ENCODE measurements at regions of chr2 and their contacts with region 1.

Region 1: GRCh38 chr2:197499594-197500526 is at the starts of genes HSPD1 and HSPE1:
- DNase-seq: peak; percentile 100
- H3K4me3 Mint-ChIP-seq: peak within 1 kb of the TSS; percentile 89
- H3K27ac Mint-ChIP-seq: peak within 1 kb of the TSS; percentile 93
- H3K4me1 Mint-ChIP-seq: peaks cover 18% of the 10 kb centered on the region
- H3K27me3 Mint-ChIP-seq: no peaks in the 10 kb centered on the region
- CTCF ChIP-seq: no peak
- total RNA-seq, gene HSPD1: 681 and 693 TPM in 2 replicates
- total RNA-seq, gene HSPE1: 80.0 and 95.2 TPM in 2 replicates

Region 2: GRCh38 chr2:196677406-196677805 is 822.5 kb before region 1 on chr2:
- CTCF ChIA-PET with region 1: no interaction called
- POLR2A ChIA-PET with region 1: no interaction called
- intact Hi-C with region 1: no loop called
- DNase-seq: peak; percentile 77
- H3K4me3 Mint-ChIP-seq: no peak overlapping the region
- H3K27ac Mint-ChIP-seq: no peak overlapping the region
- H3K4me1 Mint-ChIP-seq: no peaks in the 10 kb centered on the region
- H3K27me3 Mint-ChIP-seq: no peaks in the 10 kb centered on the region
- CTCF ChIP-seq: no peak

Region 3: DNA sequence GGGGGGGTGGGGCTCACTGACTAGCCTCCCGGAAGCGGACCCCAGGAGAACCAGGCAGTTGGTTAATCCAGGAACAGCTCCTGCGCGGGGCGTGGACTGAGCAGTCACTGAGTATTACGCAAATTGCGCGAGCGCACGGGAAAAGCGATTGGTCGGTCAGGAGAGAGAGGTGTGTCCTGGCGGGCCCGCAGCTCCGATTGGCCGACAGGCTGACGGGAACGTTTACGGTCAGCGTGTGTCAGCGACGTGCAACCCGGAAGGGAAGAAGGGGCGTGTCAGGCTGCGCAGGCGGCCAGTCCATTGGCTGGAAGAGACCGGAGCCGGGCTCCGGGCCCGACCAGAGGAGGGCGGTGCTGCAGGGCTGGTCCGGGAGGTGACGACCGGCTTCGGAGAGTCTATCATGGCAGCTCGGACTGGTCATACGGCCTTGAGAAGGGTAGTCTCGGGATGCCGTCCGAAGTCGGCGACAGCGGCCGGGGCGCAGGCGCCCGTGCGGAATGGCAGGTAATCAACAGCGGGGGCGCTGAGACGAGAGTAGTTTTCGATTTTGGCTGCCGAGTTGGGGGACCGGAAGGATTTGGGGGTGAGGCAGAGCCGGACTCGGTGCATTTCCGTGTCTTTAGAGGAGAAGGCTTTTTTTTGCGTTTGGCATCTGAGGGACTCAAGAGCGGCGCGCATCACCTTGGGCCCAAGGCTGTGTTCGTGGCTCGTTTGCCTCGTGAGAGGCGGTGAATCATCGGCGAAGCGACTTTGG is 46.5 kb before region 1 on chr2 and contains the start of gene COQ10B:
- CTCF ChIA-PET with region 1: no interaction called
- POLR2A ChIA-PET with region 1: interaction called, 135 read pairs
- intact Hi-C with region 1: loop called (anchors 5 kb)
- DNase-seq: peak; percentile 99
- H3K4me3 Mint-ChIP-seq: peak within 1 kb of the TSS; percentile 99
- H3K27ac Mint-ChIP-seq: peak within 1 kb of the TSS; percentile 100
- H3K4me1 Mint-ChIP-seq: peaks cover 16% of the 10 kb centered on the region
- H3K27me3 Mint-ChIP-seq: no peaks in the 10 kb centered on the region
- CTCF ChIP-seq: no peak
- total RNA-seq, gene COQ10B: 21.3 and 22.8 TPM in 2 replicates

Region 4: GRCh38 chr2:197487385-197487784 is 12.5 kb before region 1 on chr2:
- CTCF ChIA-PET with region 1: interaction called, 3 read pairs
- POLR2A ChIA-PET with region 1: interaction called, 39 read pairs
- intact Hi-C with region 1: no loop called
- DNase-seq: no peak
- H3K4me3 Mint-ChIP-seq: no peak overlapping the region
- H3K27ac Mint-ChIP-seq: no peak overlapping the region
- H3K4me1 Mint-ChIP-seq: no peaks in the 10 kb centered on the region
- H3K27me3 Mint-ChIP-seq: no peaks in the 10 kb centered on the region
- CTCF ChIP-seq: no peak

Region 5: DNA sequence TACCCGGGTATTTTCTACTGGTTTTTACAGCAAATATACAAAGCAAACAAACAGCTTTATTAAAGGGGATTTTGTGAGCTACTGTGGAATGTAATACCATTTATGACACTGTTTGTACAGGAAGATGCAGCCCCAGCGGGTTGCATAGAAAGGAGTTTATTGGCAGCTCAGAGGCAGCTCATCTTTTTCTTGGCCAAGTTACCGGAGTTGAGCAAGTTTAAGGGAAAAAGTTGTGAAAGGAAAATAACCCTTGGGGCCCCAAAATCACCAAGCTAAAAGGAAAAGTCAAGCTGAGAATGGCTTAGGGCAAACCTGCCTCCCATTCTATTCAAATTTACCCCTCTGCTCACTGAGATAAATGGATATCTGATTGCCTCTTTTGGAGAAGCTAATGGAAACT is 76.8 kb after region 1 on chr2:
- CTCF ChIA-PET with region 1: no interaction called
- POLR2A ChIA-PET with region 1: interaction called, 42 read pairs
- intact Hi-C with region 1: no loop called
- DNase-seq: peak; percentile 93
- H3K4me3 Mint-ChIP-seq: no peak overlapping the region
- H3K27ac Mint-ChIP-seq: peak overlapping the region; percentile 6
- H3K4me1 Mint-ChIP-seq: peaks cover 12% of the 10 kb centered on the region
- H3K27me3 Mint-ChIP-seq: no peaks in the 10 kb centered on the region
- CTCF ChIP-seq: no peak

Region 6: GRCh38 chr2:197615016-197615652 is 115.3 kb after region 1 on chr2:
- CTCF ChIA-PET with region 1: interaction called, 4 read pairs
- POLR2A ChIA-PET with region 1: interaction called, 42 read pairs
- intact Hi-C with region 1: no loop called
- DNase-seq: peak; percentile 60
- H3K4me3 Mint-ChIP-seq: no peak overlapping the region
- H3K27ac Mint-ChIP-seq: peak overlapping the region; percentile 9
- H3K4me1 Mint-ChIP-seq: peaks cover 22% of the 10 kb centered on the region
- H3K27me3 Mint-ChIP-seq: no peaks in the 10 kb centered on the region
- CTCF ChIP-seq: peak; percentile 7